Ascending aorta (tissue), 2 donors: ENCODE measurements at regions of chr2 and their contacts with region 1.

Region 1: GRCh38 chr2:187499941-187500532 is 52.0 kb upstream of the CALCRL start:
- DNase-seq: peak in 1 of 2 donors; percentile 74
- H3K4me3 ChIP-seq: no peak overlapping the region
- H3K27ac ChIP-seq: no peak overlapping the region
- H3K4me1 ChIP-seq: no peaks in the 10 kb centered on the region
- H3K27me3 ChIP-seq: no peaks in the 10 kb centered on the region
- CTCF ChIP-seq: peak; percentile 69 to 90 (median 81)

Region 2: GRCh38 chr2:187581125-187581896 is 81.3 kb after region 1 on chr2:
- intact Hi-C with region 1: loop called (anchors 1 kb)
- DNase-seq: no peak
- H3K4me3 ChIP-seq: peak overlapping the region; percentile 39 to 52
- H3K27ac ChIP-seq: no peak overlapping the region
- H3K4me1 ChIP-seq: no peaks in the 10 kb centered on the region
- H3K27me3 ChIP-seq: no peaks in the 10 kb centered on the region
- CTCF ChIP-seq: peak; percentile 59 to 66 (median 65)

Region 3: DNA sequence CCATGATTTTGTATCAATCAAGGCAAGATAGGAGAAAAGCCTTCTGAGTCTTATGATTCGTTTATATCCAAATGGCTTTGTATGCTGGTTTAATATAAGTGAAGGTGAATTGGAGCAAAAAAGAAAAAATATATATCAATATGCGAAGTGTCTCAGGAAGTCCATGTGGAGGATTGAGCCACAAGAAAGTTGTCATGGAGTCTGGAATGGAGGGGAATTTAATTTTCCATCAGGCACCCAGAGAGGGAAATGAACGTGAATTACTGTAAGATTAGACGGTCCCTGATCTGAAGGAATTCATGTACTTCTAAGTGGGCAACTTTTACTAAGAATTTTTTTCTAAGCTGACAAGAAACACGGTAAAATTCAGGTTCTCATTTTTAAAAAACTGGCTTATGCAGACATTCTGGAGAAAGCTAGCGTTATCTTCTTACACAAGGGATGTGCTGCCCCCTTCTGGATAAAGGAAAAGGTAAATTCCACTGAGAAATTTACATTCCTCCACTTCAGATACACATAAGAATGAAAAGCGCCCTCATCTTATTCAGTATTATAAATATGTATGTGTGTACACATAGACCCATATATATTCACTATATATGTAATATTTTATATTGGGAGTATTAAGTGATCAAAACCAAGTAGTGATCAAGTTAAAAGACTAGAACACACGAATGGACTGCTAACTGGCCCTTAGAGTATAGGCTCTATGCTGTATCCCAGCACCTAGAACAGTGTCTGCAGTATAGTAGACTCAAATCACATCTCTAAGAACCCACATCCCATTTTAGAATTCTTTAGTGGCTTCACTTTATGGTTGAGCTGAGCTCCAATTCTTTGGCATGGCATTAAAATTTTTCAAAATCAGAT is 343.2 kb after region 1 on chr2:
- intact Hi-C with region 1: loop called (anchors 1 kb)
- DNase-seq: no peak
- H3K4me3 ChIP-seq: no peak overlapping the region
- H3K27ac ChIP-seq: peak overlapping the region in 1 of 2 donors; percentile 52
- H3K4me1 ChIP-seq: peaks cover 0 to 4% of the 10 kb centered on the region in 2 donors
- H3K27me3 ChIP-seq: no peaks in the 10 kb centered on the region
- CTCF ChIP-seq: peak; percentile 57 to 65 (median 58)

Region 4: DNA sequence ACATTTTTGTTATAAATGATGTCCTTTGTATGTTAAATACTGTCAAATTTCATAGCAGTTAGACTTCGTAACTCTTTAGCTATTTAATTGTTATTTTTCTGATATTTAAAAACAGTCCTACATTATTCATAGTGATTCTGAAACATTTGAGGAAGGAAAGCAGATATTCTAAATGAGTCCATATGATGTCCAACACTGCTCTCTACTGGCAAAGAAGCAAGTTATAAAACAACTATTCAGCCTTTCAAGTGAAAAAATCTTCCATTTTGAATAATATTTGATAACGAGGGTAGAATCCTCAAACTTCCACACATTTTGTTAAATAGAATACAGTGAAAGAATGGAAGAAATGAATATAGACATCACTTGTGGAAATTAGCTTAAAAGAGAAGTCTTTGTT is 1012.4 kb after region 1 on chr2:
- intact Hi-C with region 1: loop called (anchors 10 kb)
- DNase-seq: no peak
- H3K4me3 ChIP-seq: no peak overlapping the region
- H3K27ac ChIP-seq: no peak overlapping the region
- H3K4me1 ChIP-seq: peaks cover 2 to 7% of the 10 kb centered on the region in 2 donors
- H3K27me3 ChIP-seq: no peaks in the 10 kb centered on the region
- CTCF ChIP-seq: peak; percentile 48 to 60 (median 48)